ENCODE measurements at regions of chr12 and their contacts with region 1.

Region 1: GRCh38 chr12:121917979-121918678 is at the start of gene CFAP251:
- DNase-seq: peak; percentile 81
- H3K4me3 ChIP-seq: peak within 1 kb of the TSS; percentile 20 to 53 (median 47)
- H3K27ac ChIP-seq: peak within 1 kb of the TSS; percentile 92
- H3K4me1 ChIP-seq: peaks cover 10% of the 10 kb centered on the region
- H3K27me3 ChIP-seq: no peaks in the 10 kb centered on the region
- CTCF ChIP-seq: peak; percentile 65 to 71
- POLR2A ChIP-seq: no peak
- total RNA-seq, gene CFAP251: 4.0 and 6.0 TPM in 2 replicates

Region 2: GRCh38 chr12:121888478-121889266 is 29.5 kb before region 1 on chr12 and contains the start of gene PSMD9:
- CTCF ChIA-PET with region 1: interaction called, 6 read pairs
- POLR2A ChIA-PET with region 1: no interaction called
- dilution Hi-C with region 1: no loop called
- intact Hi-C with region 1: loop called (anchors 2 kb)
- DNase-seq: peak; percentile 96
- H3K4me3 ChIP-seq: peak within 1 kb of the TSS; percentile 25 to 90 (median 82)
- H3K27ac ChIP-seq: peak within 1 kb of the TSS; percentile 26
- H3K4me1 ChIP-seq: peaks cover 17% of the 10 kb centered on the region
- H3K27me3 ChIP-seq: no peaks in the 10 kb centered on the region
- CTCF ChIP-seq: peak; percentile 60 to 87
- POLR2A ChIP-seq: peak; percentile 96
- total RNA-seq, gene PSMD9: 64.6 and 69.2 TPM in 2 replicates

Region 3: DNA sequence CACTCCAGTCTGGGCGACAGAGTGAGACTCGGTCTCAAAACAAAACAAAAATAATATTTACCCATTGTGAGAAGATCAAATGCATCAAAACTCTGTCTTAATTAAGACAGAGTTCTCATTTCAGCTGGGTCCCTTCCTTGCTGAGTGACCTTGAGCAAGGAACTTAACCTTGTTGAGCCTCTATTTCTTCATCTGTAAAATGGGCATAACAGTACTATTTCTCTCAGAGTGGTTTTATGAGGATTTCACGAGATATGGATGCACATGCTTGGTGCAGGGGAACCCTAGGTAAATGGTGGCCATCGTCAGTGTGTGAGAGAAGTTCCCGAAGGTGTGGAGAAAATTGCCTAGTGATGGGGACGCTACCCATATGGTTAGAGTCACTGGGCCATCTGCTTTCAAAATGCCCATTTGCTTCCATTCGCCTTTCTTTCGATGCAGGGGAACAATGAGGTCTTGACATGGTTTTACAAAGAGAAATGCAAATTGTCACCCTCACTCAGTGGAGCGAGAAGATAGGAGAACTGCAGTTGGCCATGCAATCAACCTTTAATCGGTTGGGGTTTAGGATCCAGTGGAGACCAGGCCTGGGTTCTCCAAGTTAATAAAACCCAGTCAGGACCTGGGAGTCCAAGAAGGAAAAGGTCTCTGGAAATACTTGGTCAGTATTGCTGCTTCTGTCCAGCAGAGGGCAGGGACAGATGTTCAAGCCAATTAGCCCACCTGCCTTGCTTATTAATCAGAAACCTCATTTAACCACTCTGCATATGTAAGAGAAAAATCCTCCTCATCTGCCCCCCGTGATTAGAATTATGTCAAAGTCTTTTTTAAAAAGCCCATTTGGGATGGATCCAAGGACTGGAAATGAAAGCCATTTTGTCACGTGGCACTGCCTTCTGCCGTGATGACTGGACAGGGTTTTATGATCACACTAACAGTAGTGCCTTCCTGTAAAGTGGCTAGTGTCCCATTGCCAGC is 37.4 kb after region 1 on chr12:
- CTCF ChIA-PET with region 1: interaction called, 13 read pairs
- POLR2A ChIA-PET with region 1: no interaction called
- dilution Hi-C with region 1: no loop called
- intact Hi-C with region 1: no loop called
- DNase-seq: peak; percentile 45
- H3K4me3 ChIP-seq: no peak overlapping the region
- H3K27ac ChIP-seq: no peak overlapping the region
- H3K4me1 ChIP-seq: no peaks in the 10 kb centered on the region
- H3K27me3 ChIP-seq: no peaks in the 10 kb centered on the region
- CTCF ChIP-seq: peak; percentile 58 to 67
- POLR2A ChIP-seq: no peak

Region 4: DNA sequence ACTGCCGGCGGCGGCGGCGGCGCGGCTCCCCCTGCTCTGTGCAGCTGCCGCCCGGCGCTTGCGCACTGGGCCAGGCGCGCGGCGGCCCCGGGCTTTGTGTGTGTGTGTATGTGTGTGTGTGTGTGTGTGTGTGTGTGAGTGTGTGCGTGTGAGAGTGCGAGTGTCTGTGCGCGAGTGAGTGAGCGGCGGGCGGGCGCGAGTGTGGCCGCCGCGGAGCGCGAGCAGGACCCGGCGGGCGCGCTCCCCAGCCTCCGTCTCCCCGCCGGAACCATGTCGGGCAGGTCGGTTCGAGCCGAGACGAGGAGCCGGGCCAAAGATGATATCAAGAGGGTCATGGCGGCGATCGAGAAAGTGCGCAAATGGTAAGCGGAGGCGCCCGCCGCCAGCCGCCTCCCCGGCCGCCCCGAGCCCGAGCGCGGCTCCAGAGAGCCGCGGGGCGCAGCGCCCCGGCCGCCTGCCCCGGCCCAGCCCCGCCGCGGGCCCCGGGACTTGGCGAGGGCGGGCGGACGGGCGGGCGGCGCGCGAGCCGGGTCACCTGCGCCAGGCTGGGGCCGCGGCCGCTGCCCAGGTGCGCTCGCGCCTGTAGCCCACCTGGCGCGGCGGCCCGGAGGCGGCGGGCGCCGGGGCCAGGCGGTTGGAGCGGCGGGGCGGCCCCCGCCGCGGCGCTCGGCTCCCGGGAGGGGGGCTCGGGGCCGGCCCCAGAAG is 103.8 kb after region 1 on chr12 and contains the start of gene BCL7A:
- CTCF ChIA-PET with region 1: interaction called, 21 read pairs
- POLR2A ChIA-PET with region 1: no interaction called
- dilution Hi-C with region 1: no loop called
- intact Hi-C with region 1: loop called (anchors 1 kb)
- DNase-seq: peak; percentile 72
- H3K4me3 ChIP-seq: peak within 1 kb of the TSS; percentile 58 to 78 (median 70)
- H3K27ac ChIP-seq: peak within 1 kb of the TSS; percentile 46
- H3K4me1 ChIP-seq: peaks cover 19% of the 10 kb centered on the region
- H3K27me3 ChIP-seq: no peaks in the 10 kb centered on the region
- CTCF ChIP-seq: no peak
- POLR2A ChIP-seq: peak; percentile 39
- total RNA-seq, gene BCL7A: 11.1 and 12.6 TPM in 2 replicates

Region 5: DNA sequence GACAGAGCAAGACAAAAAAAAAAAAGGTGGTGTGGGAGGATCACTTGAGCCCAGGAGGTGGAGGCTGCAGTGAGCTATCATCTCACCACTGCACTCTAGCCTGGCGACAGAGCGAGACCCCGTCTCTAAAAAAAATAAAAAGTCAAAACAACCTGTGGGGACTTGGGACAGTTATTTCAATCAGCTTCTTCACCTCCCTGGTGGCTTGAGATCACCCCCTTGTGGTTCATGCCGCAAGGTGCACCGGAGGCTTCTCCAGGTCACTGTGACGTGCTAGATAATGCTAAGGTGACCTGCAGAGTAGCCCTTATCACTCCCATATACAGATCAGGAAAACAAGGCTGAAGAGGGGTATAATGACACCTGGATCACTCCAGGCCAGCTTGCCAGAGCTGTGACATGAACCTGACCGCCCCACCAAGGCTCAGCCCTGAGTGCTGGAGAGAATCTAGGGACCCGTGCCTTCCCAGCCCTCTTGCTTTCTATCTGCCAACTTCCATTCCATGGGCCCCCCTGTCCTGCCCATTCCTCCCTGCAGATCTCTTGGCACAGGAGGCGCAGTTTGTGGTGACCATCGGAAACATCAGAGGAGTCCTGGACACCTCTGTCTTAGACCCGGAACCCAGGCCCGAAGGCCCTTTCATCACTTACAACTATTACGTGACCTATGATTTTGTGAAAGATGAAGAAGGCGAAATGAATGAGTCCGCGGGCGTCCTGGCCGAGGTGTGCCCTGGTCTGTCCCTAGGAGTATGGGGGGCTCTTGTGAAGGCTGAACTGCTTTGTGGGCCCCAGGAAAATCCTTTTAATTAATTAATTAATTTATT is 272.9 kb after region 1 on chr12:
- CTCF ChIA-PET with region 1: interaction called, 12 read pairs
- POLR2A ChIA-PET with region 1: no interaction called
- dilution Hi-C with region 1: no loop called
- intact Hi-C with region 1: no loop called
- DNase-seq: peak; percentile 75
- H3K4me3 ChIP-seq: no peak overlapping the region
- H3K27ac ChIP-seq: no peak overlapping the region
- H3K4me1 ChIP-seq: no peaks in the 10 kb centered on the region
- H3K27me3 ChIP-seq: no peaks in the 10 kb centered on the region
- CTCF ChIP-seq: peak; percentile 78 to 86
- POLR2A ChIP-seq: no peak